Right ventricle myocardium inferior (tissue), 1 donor: ENCODE measurements at regions of chr1 and their contacts with region 1.

Region 1: DNA sequence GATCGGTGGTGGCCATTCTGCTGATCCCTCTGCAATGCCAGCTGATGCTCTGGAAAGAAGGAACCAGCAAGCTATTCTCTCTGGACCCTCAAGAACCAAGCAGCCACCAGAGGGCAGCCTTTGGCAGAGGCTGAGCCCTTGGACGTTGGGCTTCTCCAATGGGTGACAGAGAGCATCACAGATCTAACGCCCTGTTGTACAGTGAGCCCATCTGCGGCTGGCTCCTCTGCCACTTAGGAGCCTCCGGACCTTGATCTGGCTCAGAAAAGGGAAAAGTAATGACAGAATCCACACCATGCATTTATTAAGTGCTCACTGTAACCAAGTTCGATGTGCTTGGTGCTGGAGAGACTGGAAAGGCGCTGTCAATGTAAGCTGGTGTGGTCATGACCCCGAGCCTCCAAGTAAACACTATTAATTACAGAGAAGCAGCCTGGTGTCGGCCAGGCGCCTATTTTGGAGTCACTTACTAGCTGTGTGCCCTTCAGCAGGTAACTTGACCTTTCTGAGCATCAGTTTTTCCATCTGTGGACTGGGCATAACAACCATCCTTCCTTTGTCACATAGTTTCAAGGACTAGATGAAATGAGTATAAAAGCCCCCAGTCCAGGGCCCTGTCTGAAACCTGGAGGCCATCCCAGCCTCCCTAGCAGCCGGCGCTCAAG is 34.9 kb downstream of the ECE1 start:
- DNase-seq: peak; percentile 92
- ATAC-seq: peak; percentile 85

Region 2: DNA sequence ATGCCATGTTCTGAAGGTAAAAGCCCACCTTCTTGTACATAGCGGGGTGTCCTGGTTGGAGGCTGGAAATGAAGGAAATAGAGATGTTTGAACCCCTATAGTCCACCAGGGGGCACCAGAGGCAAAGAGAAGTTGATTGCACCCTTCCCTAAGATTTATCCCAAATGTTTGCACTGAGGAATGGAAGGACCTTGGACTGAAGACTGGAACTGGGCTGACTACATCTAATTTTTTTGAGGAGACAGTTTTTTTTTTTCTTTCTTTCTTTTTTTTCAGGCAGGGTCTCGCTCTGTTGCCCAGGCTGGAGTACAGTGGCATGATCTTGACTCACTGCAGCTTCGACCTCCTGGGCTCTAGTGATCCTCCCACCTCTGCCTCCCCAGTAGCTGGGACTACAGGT is 23.4 kb before region 1 on chr1:
- intact Hi-C with region 1: loop called (anchors 1 kb)
- DNase-seq: no peak
- ATAC-seq: peak; percentile 59

Region 3: GRCh38 chr1:21334214-21335087 is 79.0 kb after region 1 on chr1:
- intact Hi-C with region 1: loop called (anchors 1 kb)
- DNase-seq: peak; percentile 91
- ATAC-seq: peak; percentile 24